ENCODE measurements at regions of chr3 and their contacts with region 1.

Region 1: DNA sequence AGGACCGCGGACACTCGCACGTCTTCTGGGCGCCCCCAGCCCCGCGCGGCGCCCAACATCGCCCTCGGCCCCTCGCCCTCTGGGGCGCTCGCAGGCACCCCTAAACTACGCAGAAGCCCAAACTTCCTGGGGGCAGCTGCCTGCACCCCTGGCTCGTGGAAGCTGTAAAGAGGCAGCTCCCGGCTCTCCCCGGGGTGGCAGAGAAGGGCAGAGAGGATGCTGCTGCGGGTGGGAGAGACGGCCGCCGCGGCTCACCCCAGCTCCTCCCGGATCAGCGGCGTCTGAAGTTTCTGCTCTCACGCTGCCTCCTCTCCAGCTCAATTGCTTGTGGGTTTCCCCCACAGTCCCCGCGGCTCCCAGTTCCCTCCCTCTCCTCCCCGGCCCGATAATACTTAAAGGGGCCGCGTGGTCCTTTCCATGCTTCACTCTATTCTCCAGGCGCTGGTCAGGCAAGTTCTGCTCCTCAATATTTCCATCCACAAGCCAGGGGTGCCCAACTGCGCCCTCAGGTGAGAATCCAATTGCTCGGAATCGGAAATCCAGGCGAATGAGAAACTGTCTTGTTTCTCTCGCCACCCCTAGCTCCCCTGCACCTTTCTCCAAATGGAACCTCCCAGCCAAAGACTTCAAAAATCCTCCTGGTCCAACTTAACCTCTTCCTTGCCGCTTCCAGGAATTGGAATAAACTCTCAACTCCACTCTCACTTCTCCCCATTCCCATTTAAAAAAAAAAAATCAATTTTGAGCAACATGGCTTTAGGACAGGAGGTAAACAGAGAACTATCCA is 748.5 kb downstream of the ROBO1 start:
- DNase-seq: peak; percentile 93
- H3K4me3 ChIP-seq: peak overlapping the region; percentile 71 to 96 (median 93)
- H3K27ac ChIP-seq: peak overlapping the region; percentile 82 to 95 (median 92)
- H3K4me1 ChIP-seq: peaks cover 0 to 30% (median 7%) of the 10 kb centered on the region in 4 donors
- H3K27me3 ChIP-seq: no peaks in the 10 kb centered on the region
- CTCF ChIP-seq: no peak
- EP300 ChIP-seq: no peak
- POLR2A ChIP-seq: peak; percentile 47 to 53

Region 2: DNA sequence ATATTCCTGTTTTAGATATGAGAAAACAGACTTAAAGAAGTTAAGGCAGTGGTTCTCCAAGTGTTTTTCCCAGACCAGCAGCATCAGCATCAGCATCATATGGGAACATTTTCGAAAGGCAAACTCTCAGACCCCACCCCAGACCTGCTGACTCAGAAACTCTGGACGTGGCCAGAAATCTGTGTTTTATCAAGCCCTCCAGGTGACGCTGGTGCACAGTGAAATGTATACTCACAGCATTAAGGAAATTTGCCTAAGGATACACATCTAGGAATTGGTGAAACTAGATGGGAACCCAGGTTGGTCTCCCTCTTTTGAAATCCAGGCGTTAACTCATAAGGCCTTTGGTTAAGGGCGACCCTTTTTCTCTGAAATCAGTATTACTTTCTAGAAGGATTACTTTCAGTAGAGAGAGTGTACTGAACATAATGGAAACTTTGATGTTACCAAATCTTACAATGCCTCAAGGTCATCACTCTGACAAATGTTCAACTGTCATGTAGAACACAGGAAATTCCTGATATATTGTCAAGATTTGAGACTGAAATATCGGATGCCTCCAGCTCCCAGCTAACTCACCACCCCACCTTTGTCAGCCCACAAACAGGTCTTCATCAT is 161.7 kb before region 1 on chr3:
- intact Hi-C with region 1: loop called (anchors 5 kb)
- DNase-seq: no peak
- H3K4me3 ChIP-seq: no peak overlapping the region
- H3K27ac ChIP-seq: no peak overlapping the region
- H3K4me1 ChIP-seq: peaks cover 0 to 26% (median 13%) of the 10 kb centered on the region in 4 donors
- H3K27me3 ChIP-seq: no peaks in the 10 kb centered on the region
- CTCF ChIP-seq: peak in 3 of 4 experiments; percentile 6 to 17 (median 11)
- EP300 ChIP-seq: no peak
- POLR2A ChIP-seq: no peak

Region 3: GRCh38 chr3:78872195-78872594 is 147.1 kb before region 1 on chr3:
- intact Hi-C with region 1: loop called (anchors 5 kb)
- DNase-seq: no peak
- H3K4me3 ChIP-seq: peak overlapping the region in 2 of 4 donors; percentile 15
- H3K27ac ChIP-seq: peak overlapping the region in 2 of 4 donors; percentile 13 to 20
- H3K4me1 ChIP-seq: peaks cover 0 to 41% (median 12%) of the 10 kb centered on the region in 4 donors
- H3K27me3 ChIP-seq: no peaks in the 10 kb centered on the region
- CTCF ChIP-seq: no peak
- EP300 ChIP-seq: peak in 1 of 4 donors; percentile 8
- POLR2A ChIP-seq: no peak

Region 4: DNA sequence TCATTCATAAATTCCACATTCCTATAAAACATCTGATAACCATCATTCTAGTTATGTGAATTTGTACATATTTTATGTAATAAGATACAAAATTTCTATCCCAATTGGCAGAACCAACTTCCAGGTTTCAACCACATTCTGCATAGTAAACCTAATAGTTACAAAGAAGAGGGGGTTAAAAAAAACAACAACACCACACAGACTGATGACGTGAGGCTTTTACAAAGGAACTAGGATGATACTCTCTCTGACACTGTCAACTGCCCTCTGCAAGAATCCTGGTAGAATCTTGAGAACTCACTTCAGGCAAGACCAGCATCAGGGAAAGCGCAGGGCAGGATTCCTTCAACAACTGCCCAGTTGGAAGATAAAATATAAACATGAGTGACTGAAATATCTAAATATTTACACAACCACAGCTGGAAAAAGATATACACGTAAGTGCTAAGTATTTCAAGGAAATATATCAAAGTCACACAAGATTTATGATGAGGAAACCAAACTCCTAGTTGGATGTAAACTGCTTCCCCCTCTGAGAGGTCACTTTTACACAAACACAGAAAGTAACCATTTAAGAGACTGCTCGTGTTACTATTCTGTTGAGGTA is 67.9 kb before region 1 on chr3:
- intact Hi-C with region 1: no loop called
- DNase-seq: no peak
- H3K4me3 ChIP-seq: no peak overlapping the region
- H3K27ac ChIP-seq: no peak overlapping the region
- H3K4me1 ChIP-seq: peaks cover 0 to 13% (median 9%) of the 10 kb centered on the region in 4 donors
- H3K27me3 ChIP-seq: no peaks in the 10 kb centered on the region
- CTCF ChIP-seq: no peak
- EP300 ChIP-seq: no peak
- POLR2A ChIP-seq: no peak

Region 5: GRCh38 chr3:79369306-79369705 is 350.0 kb after region 1 on chr3:
- intact Hi-C with region 1: loop called (anchors 5 kb)
- DNase-seq: no peak
- H3K4me3 ChIP-seq: no peak overlapping the region
- H3K27ac ChIP-seq: no peak overlapping the region
- H3K4me1 ChIP-seq: peaks cover 0 to 25% (median 6%) of the 10 kb centered on the region in 4 donors
- H3K27me3 ChIP-seq: no peaks in the 10 kb centered on the region
- CTCF ChIP-seq: peak in 1 of 4 experiments; percentile 33
- EP300 ChIP-seq: no peak
- POLR2A ChIP-seq: no peak